Adrenal gland (tissue), 19 donors: ENCODE measurements at regions of chr12 and their contacts with region 1.

Region 1: GRCh38 chr12:11648831-11649702 is at the start of gene ETV6:
- DNase-seq: peak; percentile 75 to 90 (median 81)
- H3K4me3 ChIP-seq: peak within 1 kb of the TSS; percentile 56 to 94 (median 84)
- H3K27ac ChIP-seq: peak within 1 kb of the TSS; percentile 87 to 100 (median 97)
- H3K4me1 ChIP-seq: peaks cover 13 to 22% of the 10 kb centered on the region in 2 donors
- H3K27me3 ChIP-seq: no peaks in the 10 kb centered on the region
- CTCF ChIP-seq: no peak
- POLR2A ChIP-seq: peak; percentile 51 to 57
- total RNA-seq, gene ETV6: 9.6 to 46.6 (median 20.9) TPM

Region 2: GRCh38 chr12:11553871-11554533 is 95.1 kb before region 1 on chr12:
- intact Hi-C with region 1: no loop called
- DNase-seq: peak; percentile 38 to 73 (median 49)
- H3K4me3 ChIP-seq: no peak overlapping the region
- H3K27ac ChIP-seq: no peak overlapping the region
- H3K4me1 ChIP-seq: no peaks in the 10 kb centered on the region
- H3K27me3 ChIP-seq: no peaks in the 10 kb centered on the region
- CTCF ChIP-seq: peak; percentile 34 to 65 (median 58)
- POLR2A ChIP-seq: no peak

Region 3: GRCh38 chr12:11689591-11690186 is 40.6 kb after region 1 on chr12:
- intact Hi-C with region 1: loop called in 1 of 2 experiments (anchors 5 kb)
- DNase-seq: no peak
- H3K4me3 ChIP-seq: no peak overlapping the region
- H3K27ac ChIP-seq: no peak overlapping the region
- H3K4me1 ChIP-seq: peaks cover 0 to 30% of the 10 kb centered on the region in 2 donors
- H3K27me3 ChIP-seq: no peaks in the 10 kb centered on the region
- CTCF ChIP-seq: no peak
- POLR2A ChIP-seq: no peak

Region 4: GRCh38 chr12:11798856-11799501 is 149.9 kb after region 1 on chr12:
- intact Hi-C with region 1: no loop called
- DNase-seq: peak in 3 of 7 donors; percentile 13 to 63 (median 32)
- H3K4me3 ChIP-seq: no peak overlapping the region
- H3K27ac ChIP-seq: no peak overlapping the region
- H3K4me1 ChIP-seq: peaks cover 35 to 50% of the 10 kb centered on the region in 2 donors
- H3K27me3 ChIP-seq: no peaks in the 10 kb centered on the region
- CTCF ChIP-seq: no peak
- POLR2A ChIP-seq: no peak

Region 5: GRCh38 chr12:11885261-11886038 is 236.4 kb after region 1 on chr12:
- intact Hi-C with region 1: loop called in 1 of 2 experiments (anchors 10 kb)
- DNase-seq: no peak
- H3K4me3 ChIP-seq: no peak overlapping the region
- H3K27ac ChIP-seq: peak overlapping the region in 2 of 5 donors; percentile 54 to 82
- H3K4me1 ChIP-seq: peaks cover 0 to 16% of the 10 kb centered on the region in 2 donors
- H3K27me3 ChIP-seq: no peaks in the 10 kb centered on the region
- CTCF ChIP-seq: no peak
- POLR2A ChIP-seq: no peak